Activated CD4-positive, alpha-beta T cell treated with anti-CD3 and anti-CD28 coated beads, Interleukin-2, amount 10 ng/mL, durations not matched to agents 24 days and 14 days (primary cell): ENCODE measurements at regions of chr4 and their contacts with region 1.

Region 1: DNA sequence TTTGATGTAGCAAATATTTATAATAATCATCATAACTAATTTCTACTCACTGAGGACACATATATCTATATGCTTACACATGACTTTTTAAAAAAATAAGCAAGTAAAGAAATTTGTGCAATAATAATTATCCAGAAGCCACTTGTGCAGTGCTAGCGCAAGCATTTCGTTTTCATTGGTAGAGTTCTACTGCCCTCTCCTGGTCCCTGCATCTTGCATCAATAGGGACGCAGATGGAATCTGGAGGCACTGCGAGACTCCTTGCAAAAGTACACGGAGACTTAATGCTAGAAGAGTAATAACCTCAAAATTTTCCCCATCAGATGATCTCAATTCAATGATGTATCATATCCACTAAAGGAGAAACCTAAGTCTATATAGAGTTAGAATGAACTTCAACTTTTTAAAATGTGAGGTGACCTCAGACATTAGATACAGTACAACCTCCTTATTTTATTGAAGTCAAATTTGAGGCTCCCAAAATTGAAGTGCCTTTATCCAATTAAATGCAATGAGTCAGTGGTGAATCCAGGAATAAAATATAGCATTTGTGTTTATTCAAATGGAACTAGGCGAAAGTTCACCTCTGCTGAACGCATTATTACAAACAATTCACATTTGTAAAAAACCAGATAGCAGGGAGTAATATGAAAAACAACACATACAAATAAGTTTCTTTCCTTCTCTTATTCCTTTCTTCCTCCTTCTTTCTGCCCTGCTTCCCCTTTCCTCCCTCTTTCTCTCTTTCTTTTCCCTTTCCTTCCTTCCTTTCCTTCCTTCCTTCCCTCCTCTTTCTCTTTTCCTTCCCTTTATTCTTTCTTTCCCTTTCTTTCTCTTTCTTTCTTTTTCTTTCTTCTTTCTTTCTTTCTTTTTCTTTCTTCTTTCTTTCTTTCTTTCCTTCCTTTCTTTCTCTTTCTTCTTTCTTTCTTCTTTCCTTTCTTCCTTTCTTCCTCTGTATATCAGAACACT is 450.0 kb downstream of the ANKRD50 start:
- DNase-seq: peak; percentile 82
- H3K4me3 Mint-ChIP-seq: no peak overlapping the region
- H3K27ac Mint-ChIP-seq: no peak overlapping the region
- H3K4me1 Mint-ChIP-seq: no peaks in the 10 kb centered on the region
- H3K27me3 Mint-ChIP-seq: peaks cover 4% of the 10 kb centered on the region

Region 2: DNA sequence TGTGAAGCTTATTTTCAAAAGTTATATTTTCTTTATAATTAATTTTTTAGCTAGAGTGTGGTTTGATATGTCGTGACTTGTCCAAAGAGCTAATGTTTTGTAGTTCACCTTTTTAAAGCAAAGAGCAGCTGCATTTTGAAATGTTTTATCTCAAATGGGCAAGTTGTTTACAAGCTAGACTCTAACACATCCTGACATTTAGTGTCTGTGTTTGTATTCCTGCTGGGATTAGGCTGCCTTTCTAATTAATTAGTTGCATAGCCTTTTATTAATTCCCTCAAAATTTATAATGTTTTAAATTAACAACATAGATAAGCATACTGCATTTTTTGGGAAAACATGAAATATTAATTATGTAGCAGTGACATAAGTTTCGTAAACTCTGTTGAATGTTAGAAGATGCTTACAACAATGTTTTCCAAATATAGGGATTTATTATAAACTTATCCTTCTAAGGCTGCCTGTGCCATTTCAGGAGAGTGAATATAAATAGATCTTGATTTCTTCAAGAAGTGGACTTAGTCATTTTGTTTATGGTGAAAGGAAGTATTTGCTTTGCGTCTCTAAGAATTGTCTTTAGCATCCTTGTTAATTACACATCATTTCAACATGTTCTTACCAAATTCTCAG is 1302.4 kb before region 1 on chr4:
- intact Hi-C with region 1: loop called (anchors 5 kb)
- DNase-seq: no peak
- H3K4me3 Mint-ChIP-seq: no peak overlapping the region
- H3K27ac Mint-ChIP-seq: no peak overlapping the region
- H3K4me1 Mint-ChIP-seq: peaks cover 12% of the 10 kb centered on the region
- H3K27me3 Mint-ChIP-seq: no peaks in the 10 kb centered on the region

Region 3: GRCh38 chr4:123770884-123771283 is 491.6 kb before region 1 on chr4:
- intact Hi-C with region 1: loop called (anchors 5 kb)
- DNase-seq: no peak
- H3K4me3 Mint-ChIP-seq: no peak overlapping the region
- H3K27ac Mint-ChIP-seq: no peak overlapping the region
- H3K4me1 Mint-ChIP-seq: peaks cover 2% of the 10 kb centered on the region
- H3K27me3 Mint-ChIP-seq: no peaks in the 10 kb centered on the region